ENCODE measurements at regions of chr18 and their contacts with region 1.

Region 1: GRCh38 chr18:45317948-45318640 is 297.2 kb upstream of the SLC14A2 start:
- DNase-seq: no peak
- ATAC-seq: no peak
- H3K4me3 ChIP-seq: no peak overlapping the region
- H3K27ac ChIP-seq: no peak overlapping the region
- H3K4me1 ChIP-seq: peaks cover 0 to 20% (median 8%) of the 10 kb centered on the region in 12 donors
- H3K27me3 ChIP-seq: no peaks in the 10 kb centered on the region
- CTCF ChIP-seq: no peak
- POLR2A ChIP-seq: no peak

Region 2: GRCh38 chr18:45255197-45255890 is 62.8 kb before region 1 on chr18:
- intact Hi-C with region 1: loop called in 1 of 10 experiments (anchors 2 kb)
- DNase-seq: peak in 2 of 5 donors; percentile 25 to 29
- ATAC-seq: peak; percentile 62 to 82 (median 77)
- H3K4me3 ChIP-seq: no peak overlapping the region
- H3K27ac ChIP-seq: peak overlapping the region in 9 of 12 donors; percentile 7 to 74 (median 49)
- H3K4me1 ChIP-seq: peaks cover 0 to 33% (median 4%) of the 10 kb centered on the region in 12 donors
- H3K27me3 ChIP-seq: no peaks in the 10 kb centered on the region
- CTCF ChIP-seq: peak in 1 of 12 donors; percentile 4
- POLR2A ChIP-seq: no peak

Measured in heart left ventricle (tissue), 16 donors.